Activated T-helper 1 cell treated with anti-CD3 and anti-CD28 coated beads, Interleukin-12 subunit alpha, Interleukin-12 subunit beta, Interleukin-2, Interleukin-4 antibody, amounts not matched to agents 30 ng/mL and 10 ng/mL and 1 ng/mL, durations not matched to agents 14 hours and 24 hours and 36 hours (primary cell): ENCODE measurements at regions of chr3 and their contacts with region 1.

Region 1: DNA sequence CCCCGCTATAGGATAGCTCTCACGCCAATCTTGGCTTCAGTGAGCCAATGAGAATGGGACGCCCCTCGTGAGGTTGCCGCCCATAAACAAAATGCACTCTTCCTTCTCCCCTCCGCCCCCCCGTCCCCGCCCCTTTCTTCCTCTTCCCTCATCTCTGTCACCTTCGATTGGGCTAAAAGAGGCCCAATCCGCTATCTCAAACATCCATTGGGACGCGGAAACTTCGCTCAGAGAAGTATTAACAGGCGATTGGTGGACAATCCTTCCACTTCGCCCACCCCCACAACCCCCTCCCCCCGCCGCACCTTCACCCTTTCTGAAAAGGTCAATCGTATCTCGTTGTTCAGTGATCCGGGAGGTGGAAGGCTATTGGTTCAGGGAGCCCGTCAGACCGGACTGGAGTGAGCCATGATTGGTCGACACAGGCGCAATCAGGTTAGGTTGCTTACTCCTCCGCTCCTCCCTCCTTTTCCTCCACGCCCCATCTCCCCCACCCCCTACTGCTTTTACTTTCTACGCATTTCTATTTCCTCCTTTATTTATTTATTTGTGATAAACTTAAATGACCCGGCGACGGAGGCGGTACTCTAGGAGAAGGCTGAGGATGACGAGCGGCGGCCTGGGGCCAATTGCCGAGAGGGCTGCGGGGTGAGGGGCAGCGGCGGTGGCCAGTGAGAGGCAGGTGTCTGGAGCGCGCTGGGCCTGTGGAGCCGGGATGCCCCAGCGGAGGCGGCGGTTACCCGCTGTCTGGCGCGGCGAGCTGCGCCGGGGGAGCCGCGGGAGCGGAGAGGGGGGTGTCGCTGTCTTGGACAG is 447 bp upstream of the ZBTB20 start:
- DNase-seq: peak; percentile 96
- H3K4me3 Mint-ChIP-seq: peak overlapping the region; percentile 96
- H3K27ac Mint-ChIP-seq: peak overlapping the region; percentile 98
- H3K4me1 Mint-ChIP-seq: peaks cover 16% of the 10 kb centered on the region
- H3K27me3 Mint-ChIP-seq: no peaks in the 10 kb centered on the region

Region 2: DNA sequence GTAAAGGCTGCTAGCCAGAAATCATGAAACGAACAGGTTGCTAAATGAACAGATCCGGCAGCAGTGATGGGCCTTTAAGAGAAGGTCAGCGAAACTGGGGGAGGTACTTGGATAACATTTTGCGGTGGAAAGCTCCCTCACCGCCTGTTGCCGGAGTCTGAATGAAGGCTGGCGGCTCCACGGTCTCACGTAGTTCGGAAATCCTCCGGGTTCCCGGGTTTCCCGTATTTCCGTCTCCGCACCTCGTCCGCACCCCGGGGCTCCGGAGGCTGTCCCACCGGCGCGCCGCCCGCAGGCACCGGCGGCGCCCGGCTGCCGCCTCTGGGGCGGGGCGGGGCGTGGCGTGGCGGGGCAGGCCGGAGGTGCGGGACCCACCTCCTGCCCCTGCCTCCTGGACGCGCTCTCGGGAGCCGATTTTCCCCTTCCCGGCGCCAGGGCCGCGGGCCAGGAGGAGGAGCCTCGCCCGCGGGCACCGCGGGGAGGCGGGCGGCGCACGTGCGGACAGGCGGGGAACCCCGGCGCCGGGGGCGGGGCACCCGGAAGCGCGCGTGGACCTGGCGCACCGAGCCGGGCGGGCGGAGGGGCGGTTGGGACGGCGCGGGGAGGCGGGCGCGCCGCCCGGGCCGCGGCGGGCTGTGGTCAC is 1200.0 kb before region 1 on chr3 and contains the start of gene ZDHHC23:
- intact Hi-C with region 1: loop called (anchors 5 kb)
- DNase-seq: peak; percentile 66
- H3K4me3 Mint-ChIP-seq: peak within 1 kb of the TSS; percentile 85
- H3K27ac Mint-ChIP-seq: peak within 1 kb of the TSS; percentile 79
- H3K4me1 Mint-ChIP-seq: no peaks in the 10 kb centered on the region
- H3K27me3 Mint-ChIP-seq: peaks cover 41% of the 10 kb centered on the region
- total RNA-seq, gene ZDHHC23: 0.88 and 1.8 TPM in 2 replicates

Region 3: DNA sequence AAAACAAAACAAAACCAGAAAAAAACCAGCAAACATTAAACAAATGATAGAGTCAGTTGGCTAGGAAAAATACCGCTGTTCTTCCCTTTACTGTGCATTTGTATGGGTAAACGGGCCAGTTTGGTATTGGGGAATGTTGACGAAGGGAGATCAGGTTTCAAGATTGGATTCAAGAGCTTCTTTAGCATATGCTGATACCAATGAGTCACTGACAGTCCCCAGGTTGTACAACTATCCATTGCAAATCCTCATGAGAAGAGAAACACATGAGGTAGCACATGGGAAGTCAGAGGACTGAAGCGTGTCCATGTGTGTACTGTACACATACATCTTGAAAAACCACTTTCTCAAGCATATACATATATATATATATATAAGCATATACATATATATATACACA is 828.1 kb before region 1 on chr3:
- intact Hi-C with region 1: loop called (anchors 10 kb)
- DNase-seq: no peak
- H3K4me3 Mint-ChIP-seq: no peak overlapping the region
- H3K27ac Mint-ChIP-seq: no peak overlapping the region
- H3K4me1 Mint-ChIP-seq: peaks cover 50% of the 10 kb centered on the region
- H3K27me3 Mint-ChIP-seq: peaks cover 2% of the 10 kb centered on the region

Region 4: GRCh38 chr3:115169808-115170207 is 22.3 kb after region 1 on chr3:
- intact Hi-C with region 1: loop called (anchors 1 kb)
- DNase-seq: no peak
- H3K4me3 Mint-ChIP-seq: no peak overlapping the region
- H3K27ac Mint-ChIP-seq: no peak overlapping the region
- H3K4me1 Mint-ChIP-seq: peaks cover 13% of the 10 kb centered on the region
- H3K27me3 Mint-ChIP-seq: peaks cover 10% of the 10 kb centered on the region

Region 5: GRCh38 chr3:115783938-115784738 is 636.6 kb after region 1 on chr3:
- intact Hi-C with region 1: loop called (anchors 1 kb)
- DNase-seq: peak; percentile 76
- H3K4me3 Mint-ChIP-seq: peak overlapping the region; percentile 83
- H3K27ac Mint-ChIP-seq: peak overlapping the region; percentile 95
- H3K4me1 Mint-ChIP-seq: peaks cover 12% of the 10 kb centered on the region
- H3K27me3 Mint-ChIP-seq: peaks cover 8% of the 10 kb centered on the region